ENCODE measurements at regions of chr11 and their contacts with region 1.

Region 1: DNA sequence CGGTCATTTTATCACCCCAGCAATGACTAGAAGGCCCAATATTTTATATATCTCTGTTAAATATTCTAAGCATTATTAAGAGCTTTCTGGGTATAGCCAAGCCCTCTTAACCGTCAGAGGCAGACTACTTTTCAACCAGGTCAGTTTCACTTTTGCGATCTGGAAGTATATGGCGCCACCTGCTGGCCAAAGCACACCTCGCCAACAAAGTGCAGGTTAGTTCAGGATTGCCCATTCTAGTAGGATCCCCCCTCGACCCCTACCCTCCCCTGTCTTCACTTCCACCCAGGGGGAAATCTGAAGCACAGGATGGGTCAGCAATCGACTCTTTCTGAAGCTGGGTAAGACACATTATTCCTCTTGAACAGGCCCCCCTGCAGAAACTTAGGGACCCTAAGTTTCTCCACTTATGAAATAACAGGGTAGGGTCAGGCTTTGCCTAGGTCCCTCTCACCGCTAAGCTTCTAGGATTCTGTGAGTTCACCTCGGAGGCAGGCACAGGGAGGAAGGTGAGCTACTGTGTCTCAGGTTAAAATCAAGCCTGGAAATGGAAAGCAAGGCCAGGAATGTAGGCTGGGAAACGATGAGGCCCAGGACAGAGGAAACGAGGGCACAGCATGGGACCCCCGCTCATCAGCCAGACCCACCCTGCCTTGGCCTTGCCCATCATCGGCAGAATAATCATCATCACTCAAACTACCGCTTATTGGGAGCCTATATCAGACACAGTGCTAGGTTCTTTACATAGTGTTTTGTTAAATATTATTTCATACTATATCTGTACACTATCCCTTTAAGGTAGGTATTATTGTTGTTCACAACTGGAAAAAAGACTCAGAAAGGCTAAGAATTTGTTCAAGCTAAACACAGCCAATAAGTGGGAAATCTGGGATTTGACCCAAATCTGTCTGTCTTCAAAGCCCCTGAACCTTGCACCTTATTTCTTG is 35.6 kb downstream of the KCNJ1 start:
- DNase-seq: peak; percentile 86
- H3K4me3 Mint-ChIP-seq: no peak overlapping the region
- H3K27ac Mint-ChIP-seq: no peak overlapping the region
- H3K4me1 Mint-ChIP-seq: peaks cover 10% of the 10 kb centered on the region
- H3K27me3 Mint-ChIP-seq: no peaks in the 10 kb centered on the region
- CTCF ChIP-seq: peak; percentile 79

Region 2: GRCh38 chr11:128026596-128026995 is 804.9 kb before region 1 on chr11:
- CTCF ChIA-PET with region 1: interaction called, 13 read pairs
- POLR2A ChIA-PET with region 1: no interaction called
- intact Hi-C with region 1: loop called (anchors 1 kb)
- DNase-seq: peak; percentile 98
- H3K4me3 Mint-ChIP-seq: peak overlapping the region; percentile 30
- H3K27ac Mint-ChIP-seq: peak overlapping the region; percentile 28
- H3K4me1 Mint-ChIP-seq: peaks cover 42% of the 10 kb centered on the region
- H3K27me3 Mint-ChIP-seq: no peaks in the 10 kb centered on the region
- CTCF ChIP-seq: no peak

Region 3: GRCh38 chr11:128172046-128172878 is 659.2 kb before region 1 on chr11:
- CTCF ChIA-PET with region 1: interaction called, 108 read pairs
- POLR2A ChIA-PET with region 1: no interaction called
- intact Hi-C with region 1: loop called (anchors 1 kb)
- DNase-seq: peak; percentile 87
- H3K4me3 Mint-ChIP-seq: no peak overlapping the region
- H3K27ac Mint-ChIP-seq: peak overlapping the region; percentile 88
- H3K4me1 Mint-ChIP-seq: peaks cover 23% of the 10 kb centered on the region
- H3K27me3 Mint-ChIP-seq: no peaks in the 10 kb centered on the region
- CTCF ChIP-seq: peak; percentile 78

Region 4: GRCh38 chr11:128448200-128448886 is 383.1 kb before region 1 on chr11:
- CTCF ChIA-PET with region 1: interaction called, 4 read pairs
- POLR2A ChIA-PET with region 1: no interaction called
- intact Hi-C with region 1: loop called (anchors 1 kb)
- DNase-seq: peak; percentile 87
- H3K4me3 Mint-ChIP-seq: peak overlapping the region; percentile 61
- H3K27ac Mint-ChIP-seq: peak overlapping the region; percentile 88
- H3K4me1 Mint-ChIP-seq: peaks cover 22% of the 10 kb centered on the region
- H3K27me3 Mint-ChIP-seq: no peaks in the 10 kb centered on the region
- CTCF ChIP-seq: peak; percentile 10

Region 5: DNA sequence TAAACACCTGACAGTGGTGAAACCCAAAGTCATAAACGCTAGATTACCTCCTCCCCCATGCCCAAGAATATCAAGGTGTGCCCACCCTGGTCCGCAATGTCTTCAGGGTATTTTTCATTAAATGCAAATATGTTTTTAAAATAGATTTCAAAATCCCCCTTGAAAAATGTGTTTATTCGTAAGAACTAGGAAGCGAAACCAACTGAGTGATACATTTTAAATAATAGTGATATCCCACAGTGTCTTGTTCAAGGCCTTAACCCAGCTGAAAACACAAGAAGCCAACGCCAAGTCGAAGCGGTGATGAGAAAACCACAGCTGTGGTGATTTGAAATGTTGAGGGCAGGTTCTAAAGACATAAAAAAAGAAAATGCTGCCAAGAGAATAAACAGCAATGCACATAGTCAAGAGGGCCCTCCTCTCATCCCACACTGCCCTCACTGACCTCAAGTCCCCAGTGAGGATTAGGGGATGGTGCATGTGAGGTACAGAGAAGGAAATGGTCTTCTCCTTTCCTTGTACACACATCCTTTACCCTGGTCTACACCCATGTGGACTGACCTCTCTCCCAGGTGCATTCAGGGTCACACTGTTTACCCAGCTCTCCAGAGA is 10.1 kb after region 1 on chr11:
- CTCF ChIA-PET with region 1: interaction called, 17 read pairs
- POLR2A ChIA-PET with region 1: no interaction called
- intact Hi-C with region 1: no loop called
- DNase-seq: no peak
- H3K4me3 Mint-ChIP-seq: no peak overlapping the region
- H3K27ac Mint-ChIP-seq: no peak overlapping the region
- H3K4me1 Mint-ChIP-seq: no peaks in the 10 kb centered on the region
- H3K27me3 Mint-ChIP-seq: peaks cover 16% of the 10 kb centered on the region
- CTCF ChIP-seq: no peak

Region 6: DNA sequence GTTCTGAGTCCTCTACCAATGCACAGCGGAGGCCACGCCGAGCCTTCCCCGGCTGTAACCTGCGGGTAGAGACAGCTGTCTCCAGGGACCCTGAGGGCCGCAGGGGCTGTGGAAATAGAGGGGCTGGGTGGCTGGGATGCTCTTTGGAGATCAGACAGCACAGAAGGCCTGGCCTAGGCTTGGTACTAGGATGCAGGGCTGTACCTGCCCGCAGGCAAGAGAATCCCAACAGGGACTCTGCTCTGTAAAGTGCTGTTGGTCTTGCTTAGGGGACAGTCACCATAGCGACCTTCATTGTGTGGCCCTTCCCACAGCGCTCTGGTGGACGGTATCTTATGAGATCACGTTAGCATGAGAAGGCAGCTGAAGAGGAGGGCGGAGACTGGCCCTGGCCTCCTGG is 48.4 kb after region 1 on chr11:
- CTCF ChIA-PET with region 1: interaction called, 10 read pairs
- POLR2A ChIA-PET with region 1: no interaction called
- intact Hi-C with region 1: no loop called
- DNase-seq: no peak
- H3K4me3 Mint-ChIP-seq: no peak overlapping the region
- H3K27ac Mint-ChIP-seq: no peak overlapping the region
- H3K4me1 Mint-ChIP-seq: no peaks in the 10 kb centered on the region
- H3K27me3 Mint-ChIP-seq: peaks cover 22% of the 10 kb centered on the region
- CTCF ChIP-seq: no peak